Activated CD4-positive, alpha-beta T cell treated with anti-CD3 and anti-CD28 coated beads, Interleukin-2, amount 10 ng/mL, durations not matched to agents 24 days and 14 days (primary cell): ENCODE measurements at regions of chr1 and their contacts with region 1.

Region 1: GRCh38 chr1:20151906-20152598 is 12.9 kb downstream of the PLA2G2F start:
- DNase-seq: peak; percentile 94
- H3K4me3 Mint-ChIP-seq: peak overlapping the region; percentile 85
- H3K27ac Mint-ChIP-seq: peak overlapping the region; percentile 73
- H3K4me1 Mint-ChIP-seq: peaks cover 16% of the 10 kb centered on the region
- H3K27me3 Mint-ChIP-seq: no peaks in the 10 kb centered on the region

Region 2: GRCh38 chr1:19918057-19918456 is 234.0 kb before region 1 on chr1:
- intact Hi-C with region 1: loop called (anchors 1 kb)
- DNase-seq: peak; percentile 93
- H3K4me3 Mint-ChIP-seq: no peak overlapping the region
- H3K27ac Mint-ChIP-seq: no peak overlapping the region
- H3K4me1 Mint-ChIP-seq: peaks cover 5% of the 10 kb centered on the region
- H3K27me3 Mint-ChIP-seq: no peaks in the 10 kb centered on the region

Region 3: DNA sequence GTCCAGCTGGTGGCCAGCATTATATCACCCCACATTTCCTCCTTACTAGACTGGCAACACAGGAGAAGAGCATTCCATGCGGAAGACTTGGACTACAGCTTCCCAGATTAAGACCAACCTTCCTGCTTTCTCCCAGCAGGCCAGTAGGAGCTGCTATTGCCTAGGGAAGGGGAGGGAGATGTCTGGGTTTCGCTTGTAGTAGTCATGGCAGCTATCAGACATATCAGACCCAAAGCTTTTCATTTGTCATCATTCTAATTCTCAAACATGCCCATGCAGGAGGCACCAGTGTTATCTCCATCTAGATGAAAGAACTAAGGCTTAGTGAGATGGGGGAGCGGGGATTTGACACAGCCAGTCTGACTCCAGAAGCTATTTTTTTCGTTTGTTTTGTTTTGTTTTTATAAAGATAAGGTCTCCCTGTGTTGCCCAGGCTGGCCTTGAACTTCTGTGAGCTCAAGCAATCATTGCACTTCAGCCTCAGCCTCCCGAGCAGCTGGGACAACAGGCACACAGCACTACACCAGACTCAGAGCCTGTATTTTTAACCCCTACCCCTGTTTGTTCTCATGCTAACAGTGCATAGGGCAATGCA is 177.1 kb before region 1 on chr1:
- intact Hi-C with region 1: loop called (anchors 2 kb)
- DNase-seq: peak; percentile 58
- H3K4me3 Mint-ChIP-seq: no peak overlapping the region
- H3K27ac Mint-ChIP-seq: no peak overlapping the region
- H3K4me1 Mint-ChIP-seq: no peaks in the 10 kb centered on the region
- H3K27me3 Mint-ChIP-seq: peaks cover 20% of the 10 kb centered on the region

Region 4: GRCh38 chr1:20058531-20058930 is 93.5 kb before region 1 on chr1:
- intact Hi-C with region 1: no loop called
- DNase-seq: peak; percentile 74
- H3K4me3 Mint-ChIP-seq: no peak overlapping the region
- H3K27ac Mint-ChIP-seq: peak overlapping the region; percentile 12
- H3K4me1 Mint-ChIP-seq: peaks cover 22% of the 10 kb centered on the region
- H3K27me3 Mint-ChIP-seq: peaks cover 21% of the 10 kb centered on the region

Region 5: GRCh38 chr1:20100632-20101355 is 51.3 kb before region 1 on chr1:
- intact Hi-C with region 1: loop called (anchors 1 kb)
- DNase-seq: peak; percentile 78
- H3K4me3 Mint-ChIP-seq: no peak overlapping the region
- H3K27ac Mint-ChIP-seq: no peak overlapping the region
- H3K4me1 Mint-ChIP-seq: peaks cover 1% of the 10 kb centered on the region
- H3K27me3 Mint-ChIP-seq: peaks cover 2% of the 10 kb centered on the region

Region 6: DNA sequence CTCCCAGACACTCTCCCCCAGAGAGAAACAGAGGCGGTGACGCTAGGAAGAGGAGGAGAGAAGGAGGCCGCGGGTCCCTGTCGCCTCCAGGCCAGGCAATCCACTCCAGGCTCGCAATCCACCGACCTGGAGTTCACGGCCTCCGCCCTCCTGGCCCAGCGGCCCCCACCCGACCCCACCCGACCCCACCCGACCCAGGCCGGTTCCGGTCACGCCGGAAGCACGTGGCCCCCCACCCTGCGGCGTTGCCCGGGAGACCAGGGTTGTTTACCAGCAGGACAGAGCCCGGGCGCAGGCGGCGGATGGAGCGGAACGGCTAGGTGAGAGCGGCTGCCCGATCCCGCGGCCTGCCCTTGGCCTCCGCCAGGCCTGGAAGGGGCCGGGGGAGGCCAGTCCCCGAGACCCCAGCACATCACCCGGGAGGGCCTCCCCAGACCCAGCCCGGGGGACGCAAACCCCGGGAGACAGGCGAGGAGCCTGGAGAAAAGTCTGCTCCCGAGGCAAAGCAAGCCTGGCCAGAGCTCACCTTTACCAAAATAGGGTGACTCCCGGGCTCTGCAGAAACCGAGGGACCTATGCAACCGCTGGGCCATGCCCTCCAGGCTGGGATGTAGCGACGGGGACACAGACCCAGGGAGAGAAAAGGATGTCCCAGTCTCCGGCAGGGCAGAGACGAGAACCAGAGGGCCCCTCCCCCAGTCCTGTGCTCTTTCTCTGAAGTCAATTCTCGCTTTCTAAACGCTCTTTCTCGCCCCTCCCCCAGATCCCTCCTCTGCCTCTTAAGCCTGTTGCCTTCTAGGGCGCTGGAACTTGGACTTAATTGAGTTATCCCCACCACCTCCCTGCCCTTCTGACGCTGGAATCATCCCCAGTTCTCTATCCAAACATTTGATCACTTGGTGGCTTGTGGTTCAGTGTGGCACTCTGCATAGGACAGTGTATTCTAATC is 34.1 kb after region 1 on chr1 and contains the starts of genes PLA2G2C and UBXN10:
- intact Hi-C with region 1: loop called (anchors 2 kb)
- DNase-seq: peak; percentile 92
- H3K4me3 Mint-ChIP-seq: peak within 1 kb of the TSS; percentile 80
- H3K27ac Mint-ChIP-seq: peak within 1 kb of the TSS; percentile 97
- H3K4me1 Mint-ChIP-seq: peaks cover 55% of the 10 kb centered on the region
- H3K27me3 Mint-ChIP-seq: peaks cover 27% of the 10 kb centered on the region
- total RNA-seq, gene PLA2G2C: 0.28 and 0.40 TPM in 2 replicates
- total RNA-seq, gene UBXN10: 1.2 and 1.3 TPM in 2 replicates

Region 7: DNA sequence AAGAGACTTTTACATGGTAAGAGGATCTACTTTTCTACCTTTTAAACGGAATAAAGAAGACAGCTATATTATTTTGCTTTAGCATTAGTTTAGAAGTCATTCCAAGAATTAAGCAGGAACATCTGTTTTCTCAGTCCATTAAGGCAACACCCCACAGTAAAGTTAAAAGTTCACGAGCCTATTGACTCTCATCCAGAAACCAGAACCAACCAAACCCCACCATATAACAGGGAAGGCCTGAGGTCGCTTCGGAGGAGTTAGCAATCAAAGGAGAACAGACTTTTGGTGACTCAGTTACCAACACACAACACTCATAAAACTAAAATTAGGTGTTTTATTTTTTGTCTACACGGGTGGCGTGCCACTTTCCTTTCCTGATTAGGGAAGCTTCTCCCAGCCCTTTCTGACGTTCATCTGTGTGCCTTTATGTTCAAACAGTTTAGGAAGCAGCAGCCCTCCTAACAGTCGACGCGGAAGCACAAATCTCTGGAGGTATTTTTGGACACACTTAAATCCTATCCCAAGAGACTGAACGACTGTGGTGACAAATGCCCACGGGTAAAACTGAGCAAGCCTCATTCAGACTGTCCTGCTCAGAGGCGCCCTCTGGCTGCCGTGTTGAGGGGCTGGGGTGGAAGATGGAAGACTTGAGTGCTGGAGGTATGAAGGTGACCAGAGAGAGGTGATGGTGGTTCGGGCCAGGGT is 42.9 kb after region 1 on chr1:
- intact Hi-C with region 1: loop called (anchors 1 kb)
- DNase-seq: peak; percentile 93
- H3K4me3 Mint-ChIP-seq: no peak overlapping the region
- H3K27ac Mint-ChIP-seq: no peak overlapping the region
- H3K4me1 Mint-ChIP-seq: peaks cover 6% of the 10 kb centered on the region
- H3K27me3 Mint-ChIP-seq: peaks cover 45% of the 10 kb centered on the region